ENCODE measurements at regions of chr1 and their contacts with region 1.

Region 1: GRCh38 chr1:30801771-30802198 is 44.2 kb upstream of the LAPTM5 start:
- DNase-seq: no peak
- ATAC-seq: peak; percentile 86
- H3K4me3 ChIP-seq: no peak overlapping the region
- H3K27ac ChIP-seq: no peak overlapping the region
- H3K4me1 ChIP-seq: no peaks in the 10 kb centered on the region
- H3K27me3 ChIP-seq: peaks cover 11 to 17% of the 10 kb centered on the region in 2 experiments
- CTCF ChIP-seq: peak; percentile 94 to 95 (median 95)
- EP300 ChIP-seq: no peak
- POLR2A ChIP-seq: no peak
- RAD21 ChIP-seq: peak; percentile 97

Region 2: DNA sequence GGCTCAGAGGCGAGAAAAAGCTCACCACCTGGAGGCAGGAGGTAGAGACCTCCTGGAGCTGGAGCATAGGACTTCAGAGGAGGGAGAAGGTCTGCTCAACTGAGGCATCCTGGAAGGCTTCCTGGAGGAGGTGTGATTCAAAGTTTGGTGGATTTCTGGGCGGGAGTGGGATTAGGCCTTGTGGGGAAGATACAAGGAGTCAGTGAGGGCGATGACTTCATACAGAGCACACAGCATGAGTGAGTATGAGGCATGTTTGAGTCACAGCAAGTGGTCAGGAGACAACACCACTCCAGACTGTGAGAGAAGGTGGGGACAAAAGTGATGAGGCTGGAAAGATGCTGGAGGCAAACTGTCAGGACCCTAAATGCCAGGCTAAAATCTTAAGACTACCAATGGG is 156.0 kb before region 1 on chr1:
- CTCF ChIA-PET with region 1: no interaction called
- POLR2A ChIA-PET with region 1: no interaction called
- RAD21 ChIA-PET with region 1: no interaction called
- SMC1A ChIA-PET with region 1: no interaction called
- in situ Hi-C with region 1: no loop called
- intact Hi-C with region 1: no loop called
- DNase-seq: no peak
- ATAC-seq: no peak
- H3K4me3 ChIP-seq: no peak overlapping the region
- H3K27ac ChIP-seq: no peak overlapping the region
- H3K4me1 ChIP-seq: no peaks in the 10 kb centered on the region
- H3K27me3 ChIP-seq: no peaks in the 10 kb centered on the region
- CTCF ChIP-seq: no peak
- EP300 ChIP-seq: no peak
- POLR2A ChIP-seq: no peak
- RAD21 ChIP-seq: no peak

Region 3: DNA sequence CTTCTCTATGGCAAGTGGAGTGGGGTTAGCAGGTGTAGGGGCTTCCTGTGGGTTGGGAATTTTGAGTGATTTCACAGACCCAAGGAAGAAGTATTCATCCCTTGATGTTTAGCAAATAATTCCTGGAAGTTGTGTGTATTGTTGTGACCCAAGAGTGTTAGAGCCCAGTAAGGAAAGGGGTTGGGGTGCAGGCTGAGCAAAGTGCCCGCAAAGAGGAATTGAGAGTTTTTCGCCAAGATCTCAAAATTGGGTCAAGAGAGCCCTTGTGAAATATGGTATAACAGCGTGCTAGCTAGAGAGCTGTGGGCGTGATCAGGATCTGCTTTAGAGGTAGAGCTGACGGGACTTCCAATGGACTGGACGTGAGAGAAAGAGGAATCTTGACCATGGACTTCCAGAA is 28.8 kb after region 1 on chr1:
- CTCF ChIA-PET with region 1: interaction called, 11 read pairs
- POLR2A ChIA-PET with region 1: no interaction called
- RAD21 ChIA-PET with region 1: no interaction called
- SMC1A ChIA-PET with region 1: no interaction called
- in situ Hi-C with region 1: no loop called
- intact Hi-C with region 1: no loop called
- DNase-seq: no peak
- ATAC-seq: no peak
- H3K4me3 ChIP-seq: no peak overlapping the region
- H3K27ac ChIP-seq: no peak overlapping the region
- H3K4me1 ChIP-seq: no peaks in the 10 kb centered on the region
- H3K27me3 ChIP-seq: no peaks in the 10 kb centered on the region
- CTCF ChIP-seq: no peak
- EP300 ChIP-seq: no peak
- POLR2A ChIP-seq: no peak
- RAD21 ChIP-seq: no peak

Region 4: GRCh38 chr1:30903343-30904034 is 101.7 kb after region 1 on chr1:
- CTCF ChIA-PET with region 1: interaction called, 21 read pairs
- POLR2A ChIA-PET with region 1: no interaction called
- RAD21 ChIA-PET with region 1: interaction called, 4 read pairs
- SMC1A ChIA-PET with region 1: interaction called, 4 read pairs
- in situ Hi-C with region 1: no loop called
- intact Hi-C with region 1: no loop called
- DNase-seq: no peak
- ATAC-seq: no peak
- H3K4me3 ChIP-seq: no peak overlapping the region
- H3K27ac ChIP-seq: no peak overlapping the region
- H3K4me1 ChIP-seq: no peaks in the 10 kb centered on the region
- H3K27me3 ChIP-seq: peaks cover 10 to 13% of the 10 kb centered on the region in 2 experiments
- CTCF ChIP-seq: no peak
- EP300 ChIP-seq: no peak
- POLR2A ChIP-seq: no peak
- RAD21 ChIP-seq: no peak

Region 5: GRCh38 chr1:30919025-30919881 is 117.5 kb after region 1 on chr1:
- CTCF ChIA-PET with region 1: interaction called, 303 read pairs
- POLR2A ChIA-PET with region 1: no interaction called
- RAD21 ChIA-PET with region 1: interaction called, 154 read pairs
- SMC1A ChIA-PET with region 1: interaction called, 160 read pairs
- in situ Hi-C with region 1: loop called (anchors 5 kb)
- intact Hi-C with region 1: no loop called
- DNase-seq: no peak
- ATAC-seq: peak; percentile 36; the same call in 1 of the 3 replicates
- H3K4me3 ChIP-seq: no peak overlapping the region
- H3K27ac ChIP-seq: no peak overlapping the region
- H3K4me1 ChIP-seq: no peaks in the 10 kb centered on the region
- H3K27me3 ChIP-seq: no peaks in the 10 kb centered on the region
- CTCF ChIP-seq: no peak
- EP300 ChIP-seq: no peak
- POLR2A ChIP-seq: no peak
- RAD21 ChIP-seq: no peak

Region 6: DNA sequence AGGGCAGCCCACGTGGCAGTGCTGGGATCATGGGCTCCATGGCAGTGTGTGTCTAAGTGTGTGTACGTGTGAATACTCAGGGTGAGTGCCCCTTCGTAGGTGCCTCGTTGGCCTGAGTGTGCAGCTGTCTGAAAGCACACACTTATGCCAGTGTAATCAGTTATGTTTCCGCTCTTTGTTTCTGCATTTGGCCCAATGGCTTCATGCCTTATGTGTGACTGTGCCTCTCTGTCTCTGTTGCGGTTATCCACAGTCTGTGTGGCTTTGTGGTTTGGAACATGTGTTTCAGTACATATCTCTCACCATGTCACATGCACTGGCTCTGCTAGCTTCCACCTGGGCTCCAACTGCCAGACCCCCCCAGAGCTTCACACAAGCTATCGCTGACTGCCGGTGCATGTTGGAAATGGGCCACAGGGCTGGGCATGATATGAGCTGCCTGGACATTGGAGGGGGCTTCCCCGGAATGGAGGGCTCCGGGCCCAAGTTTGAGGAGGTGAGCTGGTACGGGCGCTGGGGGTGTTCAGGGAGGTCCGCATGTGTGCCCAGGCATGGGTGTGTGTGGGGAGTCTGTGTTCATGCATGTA is 704.2 kb after region 1 on chr1:
- CTCF ChIA-PET with region 1: no interaction called
- POLR2A ChIA-PET with region 1: no interaction called
- RAD21 ChIA-PET with region 1: no interaction called
- SMC1A ChIA-PET with region 1: no interaction called
- in situ Hi-C with region 1: no loop called
- intact Hi-C with region 1: no loop called
- DNase-seq: peak; percentile 83
- ATAC-seq: peak; percentile 56
- H3K4me3 ChIP-seq: no peak overlapping the region
- H3K27ac ChIP-seq: 0 out of 2 replicates have a peak overlapping the region, but pooled peaks have one; percentile 51
- H3K4me1 ChIP-seq: peaks cover 23% of the 10 kb centered on the region
- H3K27me3 ChIP-seq: no peaks in the 10 kb centered on the region
- CTCF ChIP-seq: no peak
- EP300 ChIP-seq: peak; percentile 79 to 91
- POLR2A ChIP-seq: no peak; the same call in 1 of the 2 replicates
- RAD21 ChIP-seq: no peak

Measured in GM12878 (cell line).